Caco-2 (cell line): ENCODE measurements at regions of chrX and their contacts with region 1.

Region 1: GRCh38 chrX:68732906-68733493 is 85.5 kb downstream of the STARD8 start:
- DNase-seq: peak; percentile 49 to 65
- H3K4me3 ChIP-seq: no peak overlapping the region
- H3K4me3 Mint-ChIP-seq: no peak overlapping the region
- H3K27ac Mint-ChIP-seq: no peak overlapping the region
- H3K4me1 ChIP-seq: no peaks in the 10 kb centered on the region
- H3K4me1 Mint-ChIP-seq: no peaks in the 10 kb centered on the region
- H3K27me3 ChIP-seq: no peaks in the 10 kb centered on the region
- H3K27me3 Mint-ChIP-seq: peaks cover 4% of the 10 kb centered on the region
- CTCF ChIP-seq: peak; percentile 54 to 78

Region 2: GRCh38 chrX:68807818-68808217 is 74.8 kb after region 1 on chrX:
- CTCF ChIA-PET with region 1: interaction called, 7 read pairs
- POLR2A ChIA-PET with region 1: no interaction called
- intact Hi-C with region 1: loop called (anchors 1 kb)
- DNase-seq: peak in 1 of 2 experiments; percentile 26
- H3K4me3 ChIP-seq: no peak overlapping the region
- H3K4me3 Mint-ChIP-seq: no peak overlapping the region
- H3K27ac Mint-ChIP-seq: no peak overlapping the region
- H3K4me1 ChIP-seq: no peaks in the 10 kb centered on the region
- H3K4me1 Mint-ChIP-seq: peaks cover 6% of the 10 kb centered on the region
- H3K27me3 ChIP-seq: no peaks in the 10 kb centered on the region
- H3K27me3 Mint-ChIP-seq: peaks cover 2% of the 10 kb centered on the region
- CTCF ChIP-seq: peak; percentile 31 to 40